ENCODE measurements at regions of chr11 and their contacts with region 1.

Region 1: GRCh38 chr11:45917623-45918330 is at the start of gene PEX16:
- DNase-seq: peak; percentile 98
- H3K4me3 ChIP-seq: peak within 1 kb of the TSS; percentile 59 to 98 (median 80)
- H3K27ac ChIP-seq: peak within 1 kb of the TSS; percentile 80 to 96 (median 93)
- H3K4me1 ChIP-seq: peaks cover 20 to 84% (median 44%) of the 10 kb centered on the region in 6 donors
- H3K27me3 ChIP-seq: peaks cover 0 to 22% (median 13%) of the 10 kb centered on the region in 7 donors
- CTCF ChIP-seq: peak in 2 of 11 experiments; percentile 4 to 20
- POLR2A ChIP-seq: peak in 2 of 3 donors; percentile 11 to 38
- total RNA-seq, gene PEX16: 29.2 to 36.7 (median 33.7) TPM

Region 2: GRCh38 chr11:45843118-45843924 is 74.5 kb before region 1 on chr11:
- intact Hi-C with region 1: loop called (anchors 5 kb)
- DNase-seq: peak; percentile 94
- H3K4me3 ChIP-seq: peak overlapping the region in 1 of 8 donors; percentile 36
- H3K27ac ChIP-seq: peak overlapping the region in 5 of 8 donors; percentile 0 to 61 (median 39)
- H3K4me1 ChIP-seq: peaks cover 11 to 29% (median 24%) of the 10 kb centered on the region in 6 donors
- H3K27me3 ChIP-seq: no peaks in the 10 kb centered on the region
- CTCF ChIP-seq: peak; percentile 89 to 97 (median 94)
- POLR2A ChIP-seq: no peak

Measured in spleen (tissue), 13 donors.